Right lobe of liver (tissue), 6 donors: ENCODE measurements at regions of chr4 and their contacts with region 1.

Region 1: DNA sequence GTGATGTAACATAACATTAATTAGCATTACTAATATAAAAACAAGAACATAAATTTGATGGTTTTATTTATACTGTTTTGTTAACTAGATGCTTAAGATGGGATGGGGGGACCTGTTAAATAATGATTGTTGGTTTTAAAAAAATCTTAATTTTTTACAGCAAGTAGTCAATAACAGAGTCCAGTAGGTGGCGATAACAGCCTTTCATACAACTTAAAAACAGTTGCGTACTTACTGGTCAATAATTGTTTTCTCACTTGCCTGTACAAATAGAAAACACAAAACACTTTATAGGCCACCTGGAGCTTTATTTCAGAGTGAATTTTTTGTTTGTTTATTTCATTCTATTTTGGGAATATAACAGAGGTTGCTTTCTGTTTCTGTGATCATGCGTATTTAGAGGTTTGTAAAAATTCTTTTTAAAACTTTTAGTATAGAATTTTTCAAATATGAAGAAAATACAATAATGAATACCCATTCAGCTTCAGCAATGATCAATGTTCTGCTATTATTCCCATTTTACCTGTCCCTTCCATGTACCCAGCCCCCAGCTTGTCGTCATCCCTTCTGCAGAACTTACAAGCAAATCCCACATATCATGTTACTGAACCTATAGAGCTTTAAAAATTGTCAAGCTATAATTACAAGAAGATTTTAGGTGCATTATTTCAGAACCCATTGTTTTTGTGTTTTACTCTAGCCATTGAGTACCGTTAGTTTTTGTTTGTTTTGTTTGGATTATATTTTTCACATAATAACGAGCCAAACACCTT is 97.1 kb downstream of the MRPL1 start:
- DNase-seq: no peak
- ATAC-seq: peak; percentile 69 to 75 (median 72)
- H3K4me3 ChIP-seq: no peak overlapping the region
- H3K27ac ChIP-seq: no peak overlapping the region
- H3K4me1 ChIP-seq: no peaks in the 10 kb centered on the region
- H3K27me3 ChIP-seq: no peaks in the 10 kb centered on the region
- CTCF ChIP-seq: peak; percentile 61 to 68 (median 64)
- POLR2A ChIP-seq: no peak

Region 2: GRCh38 chr4:78250500-78250899 is 290.7 kb after region 1 on chr4:
- intact Hi-C with region 1: no loop called
- DNase-seq: no peak
- ATAC-seq: no peak
- H3K4me3 ChIP-seq: no peak overlapping the region
- H3K27ac ChIP-seq: no peak overlapping the region
- H3K4me1 ChIP-seq: no peaks in the 10 kb centered on the region
- H3K27me3 ChIP-seq: no peaks in the 10 kb centered on the region
- CTCF ChIP-seq: no peak
- POLR2A ChIP-seq: no peak

Region 3: GRCh38 chr4:78517050-78517652 is 557.4 kb after region 1 on chr4:
- intact Hi-C with region 1: loop called in 1 of 2 experiments (anchors 10 kb)
- DNase-seq: no peak
- ATAC-seq: peak; percentile 43 to 70 (median 61)
- H3K4me3 ChIP-seq: no peak overlapping the region
- H3K27ac ChIP-seq: no peak overlapping the region
- H3K4me1 ChIP-seq: no peaks in the 10 kb centered on the region
- H3K27me3 ChIP-seq: no peaks in the 10 kb centered on the region
- CTCF ChIP-seq: peak; percentile 50 to 64 (median 58)
- POLR2A ChIP-seq: no peak